Stomach (tissue), 19 donors: ENCODE measurements at regions of chr15 and their contacts with region 1.

Region 1: GRCh38 chr15:27897481-27897880 is 201.6 kb downstream of the OCA2 start:
- DNase-seq: no peak
- H3K4me3 ChIP-seq: no peak overlapping the region
- H3K27ac ChIP-seq: no peak overlapping the region
- H3K4me1 ChIP-seq: no peaks in the 10 kb centered on the region
- H3K27me3 ChIP-seq: peaks cover 0 to 3% (median 0%) of the 10 kb centered on the region in 3 donors
- CTCF ChIP-seq: no peak
- EP300 ChIP-seq: no peak
- POLR2A ChIP-seq: no peak

Region 2: DNA sequence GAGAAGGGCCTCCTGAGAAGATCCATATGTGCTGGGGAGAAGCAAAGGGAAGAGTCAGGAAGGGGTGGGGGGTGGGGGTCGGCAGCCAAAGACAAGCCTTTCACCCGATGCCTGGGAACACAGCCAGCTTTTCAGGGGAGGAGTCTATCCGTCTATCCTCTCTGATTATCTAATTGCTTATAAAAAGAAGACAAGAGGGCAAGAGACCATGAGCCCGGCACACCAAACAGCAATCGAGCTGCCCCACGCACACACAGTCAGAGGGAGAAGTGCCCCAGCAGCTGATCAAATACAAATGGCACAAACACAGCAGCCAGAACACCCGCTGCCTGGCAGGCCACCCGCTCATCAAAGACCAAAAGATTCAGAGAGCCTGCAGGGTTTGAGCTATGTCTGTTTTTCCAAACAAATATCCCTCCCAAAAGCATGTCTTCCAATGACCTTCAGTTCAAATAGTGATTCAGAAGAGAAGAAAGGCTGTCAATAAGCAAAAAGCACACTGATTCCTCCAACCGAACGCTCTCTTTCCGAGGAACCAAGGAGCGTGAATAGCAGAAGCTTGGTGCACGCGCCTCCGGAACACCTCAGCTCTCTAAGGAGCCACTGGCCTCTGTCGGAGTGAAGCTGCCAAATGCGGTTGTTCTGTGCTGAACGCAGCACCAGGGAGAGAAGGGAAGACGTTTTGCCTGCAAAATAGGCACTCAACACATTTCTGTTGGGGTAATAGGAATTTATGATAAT is 217.6 kb before region 1 on chr15:
- intact Hi-C with region 1: loop called (anchors 10 kb)
- DNase-seq: peak in 1 of 2 donors; percentile 80
- H3K4me3 ChIP-seq: no peak overlapping the region
- H3K27ac ChIP-seq: no peak overlapping the region
- H3K4me1 ChIP-seq: no peaks in the 10 kb centered on the region
- H3K27me3 ChIP-seq: no peaks in the 10 kb centered on the region
- CTCF ChIP-seq: no peak
- EP300 ChIP-seq: no peak
- POLR2A ChIP-seq: no peak